AG04450 (cell line): ENCODE measurements at regions of chr1 and their contacts with region 1.

Region 1: GRCh38 chr1:223700942-223701637 is 11.2 kb upstream of the CAPN2 start:
- DNase-seq: peak; percentile 95
- H3K4me3 ChIP-seq: peak overlapping the region; percentile 54
- H3K27ac ChIP-seq: peak overlapping the region; percentile 100
- H3K27me3 ChIP-seq: no peaks in the 10 kb centered on the region
- CTCF ChIP-seq: no peak

Region 2: DNA sequence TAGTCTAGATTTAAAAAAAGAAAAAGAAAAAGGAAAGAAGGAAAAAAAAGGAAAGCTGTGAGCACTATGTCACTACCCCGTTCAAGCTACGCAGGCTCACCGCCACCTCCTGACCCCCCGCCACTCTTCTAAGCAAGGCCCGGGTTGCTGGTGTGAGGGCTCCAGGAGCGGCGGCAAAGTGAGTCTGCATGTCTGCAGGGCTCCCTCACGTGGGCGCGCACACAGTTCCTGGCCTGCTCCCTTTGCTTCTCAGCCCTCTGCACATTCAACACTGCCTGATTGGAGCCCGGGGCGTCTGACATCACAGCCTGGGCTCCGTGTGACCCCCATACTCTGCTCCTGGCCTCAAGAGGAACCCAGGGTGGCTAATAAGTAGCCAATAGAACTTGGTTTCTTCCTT is 476.6 kb before region 1 on chr1:
- CTCF ChIA-PET with region 1: no interaction called
- POLR2A ChIA-PET with region 1: no interaction called
- DNase-seq: no peak
- H3K4me3 ChIP-seq: no peak overlapping the region
- H3K27ac ChIP-seq: no peak overlapping the region
- H3K27me3 ChIP-seq: no peaks in the 10 kb centered on the region
- CTCF ChIP-seq: no peak

Region 3: DNA sequence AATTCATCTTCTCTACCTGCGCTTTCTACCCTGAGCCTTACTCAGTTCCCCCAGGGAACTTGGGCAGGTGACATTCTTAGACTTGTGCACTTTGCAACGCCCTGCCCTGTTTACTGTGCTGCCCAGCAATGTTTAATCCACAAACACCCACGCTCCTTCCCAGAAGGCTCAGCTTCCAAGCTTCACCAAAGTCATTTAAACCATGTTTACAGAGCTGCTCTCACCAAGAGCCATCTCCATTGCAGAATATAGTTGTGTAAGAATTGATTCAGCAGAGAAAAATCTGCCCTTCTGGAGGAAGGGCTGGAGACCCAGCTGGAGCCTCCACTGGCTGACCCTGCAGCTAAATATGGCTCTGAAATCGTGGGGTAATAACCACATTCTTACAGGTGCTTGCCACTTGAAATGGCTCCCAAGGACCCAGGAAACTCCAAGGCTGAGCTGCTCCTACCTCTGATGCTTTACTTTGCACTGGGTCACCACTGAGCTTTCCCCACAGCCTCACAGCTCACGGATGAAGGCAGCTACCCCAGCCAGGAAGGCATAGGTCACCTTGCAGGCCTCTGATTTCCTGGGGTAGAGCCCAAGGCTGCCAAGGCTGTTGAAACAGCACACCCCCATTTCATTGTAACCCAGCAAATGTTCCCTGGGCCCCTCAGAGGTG is 20.0 kb after region 1 on chr1:
- CTCF ChIA-PET with region 1: interaction called, 4 read pairs
- POLR2A ChIA-PET with region 1: interaction called, 10 read pairs
- DNase-seq: peak; percentile 85
- H3K4me3 ChIP-seq: no peak overlapping the region
- H3K27ac ChIP-seq: peak overlapping the region; percentile 96
- H3K27me3 ChIP-seq: no peaks in the 10 kb centered on the region
- CTCF ChIP-seq: no peak

Region 4: DNA sequence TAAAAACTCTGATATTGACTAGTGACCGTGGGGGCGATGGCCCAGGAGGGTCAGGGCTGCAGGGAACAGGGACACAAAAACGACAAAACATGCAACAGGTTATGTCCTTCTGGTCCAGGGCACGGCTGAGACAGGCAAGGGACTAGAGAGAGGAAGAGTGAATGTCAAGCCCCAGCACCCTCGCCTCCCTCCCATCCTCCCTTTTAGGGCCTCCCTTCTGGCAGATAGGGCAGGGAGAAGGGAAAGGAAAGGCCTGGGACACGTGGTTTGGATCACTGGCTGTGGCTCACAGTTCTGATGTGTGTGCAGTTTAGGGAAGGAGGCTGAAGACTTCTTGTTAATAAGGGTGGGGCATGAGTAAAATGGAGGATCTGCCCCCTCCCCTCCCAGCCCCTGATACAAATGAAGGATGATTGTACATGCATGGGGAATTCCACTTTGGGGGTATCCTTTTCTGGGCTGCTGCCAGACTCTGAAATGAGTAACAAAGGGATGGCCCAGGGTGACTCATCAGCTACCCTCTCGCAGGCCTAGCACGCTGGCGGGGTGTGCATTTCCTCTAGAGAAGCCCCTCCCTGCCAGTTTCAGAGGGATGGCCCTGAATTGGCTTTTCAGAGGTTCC is 25.4 kb after region 1 on chr1:
- CTCF ChIA-PET with region 1: interaction called, 4 read pairs
- POLR2A ChIA-PET with region 1: interaction called, 11 read pairs
- DNase-seq: peak; percentile 90
- H3K4me3 ChIP-seq: peak overlapping the region; percentile 22; the same call in 1 of the 2 replicates
- H3K27ac ChIP-seq: peak overlapping the region; percentile 91
- H3K27me3 ChIP-seq: no peaks in the 10 kb centered on the region
- CTCF ChIP-seq: no peak

Region 5: DNA sequence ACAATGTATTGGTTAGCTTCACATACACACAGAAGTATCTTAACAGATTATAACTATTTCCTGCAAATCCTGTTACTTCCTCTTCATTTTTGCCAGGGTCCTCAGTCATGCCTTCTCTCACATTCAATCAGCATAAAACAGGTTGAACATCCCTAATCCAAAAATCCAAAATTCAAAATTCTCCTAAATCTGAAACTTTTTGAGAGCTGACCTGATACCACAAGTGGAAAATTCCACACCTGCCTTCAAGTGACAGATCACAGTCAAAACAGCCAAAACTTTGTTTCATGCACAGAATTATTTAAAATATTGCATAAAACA is 350.0 kb after region 1 on chr1:
- CTCF ChIA-PET with region 1: interaction called, 16 read pairs
- POLR2A ChIA-PET with region 1: no interaction called
- DNase-seq: no peak
- H3K4me3 ChIP-seq: no peak overlapping the region
- H3K27ac ChIP-seq: no peak overlapping the region
- H3K27me3 ChIP-seq: no peaks in the 10 kb centered on the region
- CTCF ChIP-seq: no peak

Region 6: DNA sequence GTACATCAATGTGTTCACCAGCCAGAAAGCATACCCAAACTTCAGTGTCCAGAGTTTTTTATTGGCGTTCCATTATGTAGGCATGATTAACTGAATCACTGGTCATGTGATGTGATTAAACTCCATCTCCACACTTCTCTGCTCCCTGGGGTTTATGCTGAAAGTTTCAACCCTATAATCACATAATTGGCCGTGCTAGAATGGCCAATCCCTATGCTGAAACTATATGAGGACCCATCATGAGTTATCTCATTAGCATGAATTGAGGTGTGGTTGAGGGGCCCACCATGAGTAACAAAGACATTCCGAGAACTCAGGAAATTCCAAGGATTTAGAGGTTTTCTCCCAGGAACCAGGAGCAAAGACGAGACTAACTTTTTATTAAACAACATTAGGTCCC is 381.1 kb after region 1 on chr1:
- CTCF ChIA-PET with region 1: no interaction called
- POLR2A ChIA-PET with region 1: no interaction called
- DNase-seq: no peak
- H3K4me3 ChIP-seq: no peak overlapping the region
- H3K27ac ChIP-seq: no peak overlapping the region
- H3K27me3 ChIP-seq: no peaks in the 10 kb centered on the region
- CTCF ChIP-seq: no peak